ENCODE measurements at regions of chr11 and their contacts with region 1.

Region 1: GRCh38 chr11:1852877-1853276 is at the start of gene LSP1:
- DNase-seq: peak; percentile 51 to 92 (median 82)
- ATAC-seq: peak; percentile 69 to 76
- H3K4me3 Mint-ChIP-seq: peak within 1 kb of the TSS; percentile 95 to 100 (median 99)
- H3K27ac Mint-ChIP-seq: peak within 1 kb of the TSS; percentile 93 to 100 (median 98)
- H3K4me1 Mint-ChIP-seq: peaks cover 14 to 77% (median 75%) of the 10 kb centered on the region in 4 donors
- H3K27me3 Mint-ChIP-seq: no peaks in the 10 kb centered on the region
- polyA plus RNA-seq, gene LSP1: 326 to 438 (median 338) TPM

Region 2: GRCh38 chr11:1532014-1532586 is 320.8 kb before region 1 on chr11:
- POLR2A ChIA-PET with region 1: no interaction called
- DNase-seq: no peak
- ATAC-seq: no peak
- H3K4me3 Mint-ChIP-seq: peak overlapping the region in 1 of 10 donors; percentile 10
- H3K27ac Mint-ChIP-seq: peak overlapping the region in 1 of 10 donors; percentile 71
- H3K4me1 Mint-ChIP-seq: peaks cover 14 to 72% (median 47%) of the 10 kb centered on the region in 4 donors
- H3K27me3 Mint-ChIP-seq: no peaks in the 10 kb centered on the region

Region 3: DNA sequence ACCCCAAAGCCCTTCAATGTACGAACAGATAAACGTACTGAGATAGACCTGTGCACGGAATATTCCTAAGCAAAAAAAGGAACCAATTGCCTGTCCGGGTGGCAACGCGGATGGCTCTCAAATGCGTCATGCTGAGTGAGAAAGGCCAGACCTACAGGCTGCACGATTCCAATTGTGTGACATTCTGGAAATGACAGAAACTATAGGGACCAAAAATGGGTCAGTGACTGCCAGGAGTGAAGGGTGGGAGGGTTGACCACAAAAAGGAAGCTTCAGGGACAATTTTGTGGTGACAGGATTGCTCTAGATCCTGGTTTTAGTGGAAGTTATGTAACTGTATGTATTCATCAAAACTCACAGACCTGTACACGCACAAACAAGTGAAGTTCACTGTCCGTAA is 42.1 kb before region 1 on chr11:
- POLR2A ChIA-PET with region 1: no interaction called
- DNase-seq: no peak
- ATAC-seq: no peak
- H3K4me3 Mint-ChIP-seq: no peak overlapping the region
- H3K27ac Mint-ChIP-seq: no peak overlapping the region
- H3K4me1 Mint-ChIP-seq: peaks cover 0 to 4% (median under 1%) of the 10 kb centered on the region in 4 donors
- H3K27me3 Mint-ChIP-seq: peaks cover 0 to 16% (median 1%) of the 10 kb centered on the region in 5 donors

Region 4: DNA sequence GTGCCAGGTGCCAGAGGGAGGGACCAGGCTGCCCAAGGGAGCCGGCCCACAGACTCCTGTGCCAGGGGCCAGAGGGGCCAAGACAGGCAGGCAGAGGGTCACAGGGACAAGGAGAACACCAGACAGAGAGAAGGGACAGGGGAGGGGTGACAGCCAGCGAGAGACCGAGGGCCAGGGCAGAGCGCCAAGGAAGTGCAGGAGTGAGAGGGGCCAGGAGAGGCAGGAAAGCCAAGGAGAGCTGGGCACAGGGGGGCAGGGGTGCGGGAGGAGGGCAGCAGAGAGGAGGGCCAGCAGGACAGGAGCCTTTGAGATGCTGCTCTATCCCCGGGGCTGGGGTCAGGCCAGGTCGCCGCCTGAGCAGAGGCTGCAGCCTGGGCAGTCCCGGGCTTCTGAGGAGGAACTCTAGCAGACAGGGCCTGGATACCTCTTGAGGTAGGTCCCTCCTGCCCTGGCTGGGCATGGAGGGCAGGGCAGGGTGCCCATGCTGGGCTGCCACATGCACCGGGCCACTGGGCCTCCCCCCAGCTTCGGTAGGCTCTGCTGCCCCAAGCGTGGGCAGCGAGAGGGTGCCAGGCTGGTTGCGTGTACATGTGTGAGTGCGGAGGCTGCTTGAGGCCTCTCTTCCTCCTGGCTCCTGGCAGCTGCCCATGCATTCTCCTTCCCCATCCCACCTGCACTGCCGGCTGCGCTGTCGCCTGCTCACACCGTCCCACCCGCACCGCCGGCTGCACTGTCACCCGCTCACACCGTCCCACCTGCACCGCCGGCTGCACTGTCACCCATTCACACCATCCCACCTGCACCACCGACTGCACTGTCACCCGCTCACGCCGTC is 12.2 kb after region 1 on chr11:
- POLR2A ChIA-PET with region 1: interaction called, 31 read pairs
- DNase-seq: no peak
- ATAC-seq: no peak
- H3K4me3 Mint-ChIP-seq: peak overlapping the region in 2 of 10 donors; percentile 26 to 79
- H3K27ac Mint-ChIP-seq: peak overlapping the region in 8 of 10 donors; percentile 16 to 89 (median 66)
- H3K4me1 Mint-ChIP-seq: peaks cover 22 to 61% (median 46%) of the 10 kb centered on the region in 4 donors
- H3K27me3 Mint-ChIP-seq: no peaks in the 10 kb centered on the region

Region 5: DNA sequence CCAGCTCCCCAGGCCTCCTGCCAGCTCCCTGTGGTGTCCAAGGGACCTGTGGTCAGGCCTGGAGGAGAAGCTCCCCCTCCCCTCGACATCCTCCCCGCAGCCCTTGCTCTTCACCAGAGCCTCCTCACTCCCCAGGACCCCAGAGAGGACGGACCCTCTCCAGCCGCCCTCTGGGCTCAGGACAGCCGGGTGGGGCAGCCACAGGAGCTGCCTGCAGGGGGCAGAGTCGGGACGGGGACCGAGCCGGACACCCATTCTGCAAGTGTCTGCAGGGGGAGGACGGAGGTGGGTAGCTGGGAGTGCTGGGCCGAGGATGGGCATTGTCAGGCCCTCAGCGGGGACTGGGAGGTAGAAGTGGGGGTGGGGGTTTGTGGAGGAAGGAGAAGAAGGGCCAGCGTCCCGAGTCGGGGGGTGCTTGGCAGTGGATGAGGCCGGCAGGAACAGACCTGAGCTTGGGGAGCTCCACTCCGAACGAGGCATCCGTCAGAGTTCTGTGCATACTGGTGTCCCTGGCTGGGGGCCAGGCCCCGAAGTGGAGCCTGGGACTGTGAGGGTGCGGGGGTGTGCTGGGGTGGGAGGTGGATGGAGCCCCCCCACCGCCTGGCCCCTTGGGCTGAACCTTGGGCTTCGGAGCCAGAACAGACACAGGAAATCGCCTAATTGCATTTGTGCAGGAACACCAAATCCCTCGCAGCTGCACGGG is 23.6 kb after region 1 on chr11:
- POLR2A ChIA-PET with region 1: interaction called, 53 read pairs
- DNase-seq: peak in 1 of 10 donors; percentile 59
- ATAC-seq: no peak
- H3K4me3 Mint-ChIP-seq: no peak overlapping the region
- H3K27ac Mint-ChIP-seq: peak overlapping the region in 2 of 10 donors; percentile 43 to 68
- H3K4me1 Mint-ChIP-seq: peaks cover 18 to 65% (median 47%) of the 10 kb centered on the region in 4 donors
- H3K27me3 Mint-ChIP-seq: no peaks in the 10 kb centered on the region

Region 6: GRCh38 chr11:1889224-1890120 is 36.6 kb after region 1 on chr11:
- POLR2A ChIA-PET with region 1: interaction called, 163 read pairs
- DNase-seq: peak; percentile 67 to 92 (median 85)
- ATAC-seq: peak; percentile 82 to 95
- H3K4me3 Mint-ChIP-seq: peak overlapping the region; percentile 73 to 93 (median 82)
- H3K27ac Mint-ChIP-seq: peak overlapping the region; percentile 70 to 94 (median 90)
- H3K4me1 Mint-ChIP-seq: peaks cover 31 to 54% (median 52%) of the 10 kb centered on the region in 4 donors
- H3K27me3 Mint-ChIP-seq: no peaks in the 10 kb centered on the region

Measured in naive thymus-derived CD8-positive, alpha-beta T cell (primary cell).